ENCODE measurements at regions of chr13 and their contacts with region 1.

Region 1: DNA sequence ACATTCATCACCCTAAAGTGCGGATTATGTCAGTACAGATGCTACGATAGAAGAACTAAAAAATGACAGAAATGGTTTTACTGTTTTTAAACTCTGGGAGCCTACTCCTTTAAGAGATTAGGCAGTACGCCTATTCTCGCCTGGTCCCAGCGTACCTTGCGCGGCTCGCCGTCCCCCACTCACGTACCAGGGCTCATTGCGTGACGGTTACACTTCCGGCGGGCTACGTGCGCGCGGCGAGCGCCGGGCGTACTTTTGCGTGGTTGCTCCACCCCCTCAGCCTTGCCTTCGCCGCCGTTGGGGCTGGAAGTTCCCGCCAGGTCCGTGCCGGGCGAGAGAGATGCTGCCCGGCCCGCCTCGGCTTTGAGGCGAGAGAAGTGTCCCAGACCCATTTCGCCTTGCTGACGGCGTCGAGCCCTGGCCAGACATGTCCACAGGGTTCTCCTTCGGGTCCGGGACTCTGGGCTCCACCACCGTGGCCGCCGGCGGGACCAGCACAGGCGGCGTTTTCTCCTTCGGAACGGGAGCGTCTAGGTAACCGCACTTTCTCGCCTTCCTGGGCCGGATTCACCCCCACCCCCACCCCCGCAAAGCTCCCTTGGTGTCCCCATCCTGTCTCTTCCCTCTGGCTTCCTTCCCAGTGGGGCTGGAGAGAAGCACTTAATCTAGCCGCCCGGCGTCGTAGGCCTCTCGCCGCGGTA is at the start of gene NUP58:
- DNase-seq: peak; percentile 83 to 98 (median 93)
- ATAC-seq: peak; percentile 99
- H3K4me3 ChIP-seq: peak within 1 kb of the TSS; percentile 81 to 84
- H3K4me3 Mint-ChIP-seq: peak within 1 kb of the TSS; percentile 95
- H3K27ac ChIP-seq: peak within 1 kb of the TSS; percentile 83 to 92
- H3K27ac Mint-ChIP-seq: peak within 1 kb of the TSS; percentile 94
- H3K4me1 ChIP-seq: peaks cover 18% of the 10 kb centered on the region
- H3K4me1 Mint-ChIP-seq: peaks cover 46% of the 10 kb centered on the region
- H3K27me3 ChIP-seq: peaks cover 0 to 5% of the 10 kb centered on the region in 2 experiments
- H3K27me3 Mint-ChIP-seq: peaks cover 8% of the 10 kb centered on the region
- CTCF ChIP-seq: no peak
- total RNA-seq, gene NUP58: 73.2 to 78.9 TPM

Region 2: GRCh38 chr13:23888658-23889614 is 1412.6 kb before region 1 on chr13 and contains the start of gene MIPEP:
- CTCF ChIA-PET with region 1: no interaction called
- POLR2A ChIA-PET with region 1: no interaction called
- intact Hi-C with region 1: loop called in 1 of 2 experiments (anchors 2 kb)
- DNase-seq: peak; percentile 73 to 95 (median 87)
- ATAC-seq: peak; percentile 93
- H3K4me3 ChIP-seq: peak within 1 kb of the TSS; percentile 79
- H3K4me3 Mint-ChIP-seq: peak within 1 kb of the TSS; percentile 90
- H3K27ac ChIP-seq: peak within 1 kb of the TSS; percentile 61 to 71
- H3K27ac Mint-ChIP-seq: peak within 1 kb of the TSS; percentile 88
- H3K4me1 ChIP-seq: peaks cover 7% of the 10 kb centered on the region
- H3K4me1 Mint-ChIP-seq: peaks cover 23% of the 10 kb centered on the region
- H3K27me3 ChIP-seq: no peaks in the 10 kb centered on the region
- H3K27me3 Mint-ChIP-seq: peaks cover 3% of the 10 kb centered on the region
- CTCF ChIP-seq: peak; percentile 65
- total RNA-seq, gene MIPEP: 3.0 to 3.8 TPM

Region 3: DNA sequence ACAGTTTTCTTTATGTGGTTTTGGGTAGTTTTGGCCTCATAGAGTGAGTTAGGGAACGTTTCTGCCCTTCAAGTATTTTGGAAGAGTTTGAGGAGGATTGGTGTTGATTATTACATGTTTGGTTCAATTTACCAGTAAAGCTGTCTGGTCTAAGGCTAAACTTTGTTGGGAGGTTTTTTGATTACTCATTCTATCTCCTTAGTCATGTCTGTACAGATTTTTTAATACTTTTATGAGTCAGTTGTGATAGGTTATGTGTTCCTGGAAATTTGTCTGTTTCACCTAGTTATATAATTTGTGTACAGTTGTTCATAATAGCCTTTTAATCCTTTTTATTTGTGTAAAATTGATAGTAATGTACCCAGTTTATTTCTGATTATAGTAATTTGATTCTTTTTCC is 517.2 kb before region 1 on chr13:
- CTCF ChIA-PET with region 1: no interaction called
- POLR2A ChIA-PET with region 1: no interaction called
- intact Hi-C with region 1: no loop called
- DNase-seq: no peak
- ATAC-seq: no peak
- H3K4me3 ChIP-seq: no peak overlapping the region
- H3K4me3 Mint-ChIP-seq: no peak overlapping the region
- H3K27ac ChIP-seq: no peak overlapping the region
- H3K27ac Mint-ChIP-seq: no peak overlapping the region
- H3K4me1 ChIP-seq: no peaks in the 10 kb centered on the region
- H3K4me1 Mint-ChIP-seq: no peaks in the 10 kb centered on the region
- H3K27me3 ChIP-seq: peaks cover 0 to 3% of the 10 kb centered on the region in 2 experiments
- H3K27me3 Mint-ChIP-seq: peaks cover 27% of the 10 kb centered on the region
- CTCF ChIP-seq: no peak

Region 4: DNA sequence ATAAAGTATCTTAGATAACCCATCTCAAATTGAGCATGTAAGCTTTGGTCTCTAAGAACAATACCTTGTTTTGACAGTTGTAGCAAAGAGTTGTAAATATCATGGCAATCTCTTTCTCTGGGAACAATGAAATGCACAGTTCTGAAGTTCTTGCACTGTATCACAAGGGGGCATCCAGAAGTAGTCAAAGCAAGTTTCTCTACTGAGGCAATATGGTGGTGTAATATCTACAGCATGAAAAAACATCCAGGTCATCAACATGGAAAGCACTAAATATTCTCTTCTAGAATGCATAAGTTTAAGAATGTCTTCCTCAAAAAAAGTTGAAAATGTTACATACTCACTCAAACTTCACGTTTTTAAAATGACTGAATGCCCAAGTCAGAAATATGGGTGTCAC is 33.8 kb before region 1 on chr13:
- CTCF ChIA-PET with region 1: no interaction called
- POLR2A ChIA-PET with region 1: no interaction called
- intact Hi-C with region 1: loop called (anchors 5 kb)
- DNase-seq: peak in 2 of 9 experiments; percentile 31 to 51
- ATAC-seq: peak; percentile 92
- H3K4me3 ChIP-seq: no peak overlapping the region
- H3K4me3 Mint-ChIP-seq: no peak overlapping the region
- H3K27ac ChIP-seq: no peak overlapping the region
- H3K27ac Mint-ChIP-seq: peak overlapping the region; percentile 3
- H3K4me1 ChIP-seq: no peaks in the 10 kb centered on the region
- H3K4me1 Mint-ChIP-seq: peaks cover 16% of the 10 kb centered on the region
- H3K27me3 ChIP-seq: no peaks in the 10 kb centered on the region
- H3K27me3 Mint-ChIP-seq: no peaks in the 10 kb centered on the region
- CTCF ChIP-seq: no peak

Region 5: GRCh38 chr13:25286969-25287961 is 14.2 kb before region 1 on chr13 and contains the start of gene MTMR6:
- CTCF ChIA-PET with region 1: interaction called, 14 read pairs
- POLR2A ChIA-PET with region 1: interaction called, 13 read pairs
- intact Hi-C with region 1: loop called (anchors 1 kb)
- DNase-seq: peak; percentile 90 to 98 (median 94)
- ATAC-seq: peak; percentile 81
- H3K4me3 ChIP-seq: peak within 1 kb of the TSS; percentile 83 to 95
- H3K4me3 Mint-ChIP-seq: peak within 1 kb of the TSS; percentile 98
- H3K27ac ChIP-seq: peak within 1 kb of the TSS; percentile 94 to 97
- H3K27ac Mint-ChIP-seq: peak within 1 kb of the TSS; percentile 99
- H3K4me1 ChIP-seq: peaks cover 23% of the 10 kb centered on the region
- H3K4me1 Mint-ChIP-seq: peaks cover 41% of the 10 kb centered on the region
- H3K27me3 ChIP-seq: peaks cover 0 to 2% of the 10 kb centered on the region in 2 experiments
- H3K27me3 Mint-ChIP-seq: peaks cover 10% of the 10 kb centered on the region
- CTCF ChIP-seq: peak; percentile 99
- total RNA-seq, gene MTMR6: 41.9 to 44.4 TPM

Region 6: GRCh38 chr13:25447396-25447795 is 145.9 kb after region 1 on chr13:
- CTCF ChIA-PET with region 1: no interaction called
- POLR2A ChIA-PET with region 1: no interaction called
- intact Hi-C with region 1: no loop called
- DNase-seq: no peak
- ATAC-seq: no peak
- H3K4me3 ChIP-seq: no peak overlapping the region
- H3K4me3 Mint-ChIP-seq: no peak overlapping the region
- H3K27ac ChIP-seq: no peak overlapping the region
- H3K27ac Mint-ChIP-seq: no peak overlapping the region
- H3K4me1 ChIP-seq: no peaks in the 10 kb centered on the region
- H3K4me1 Mint-ChIP-seq: no peaks in the 10 kb centered on the region
- H3K27me3 ChIP-seq: no peaks in the 10 kb centered on the region
- H3K27me3 Mint-ChIP-seq: peaks cover 23% of the 10 kb centered on the region
- CTCF ChIP-seq: no peak

Region 7: DNA sequence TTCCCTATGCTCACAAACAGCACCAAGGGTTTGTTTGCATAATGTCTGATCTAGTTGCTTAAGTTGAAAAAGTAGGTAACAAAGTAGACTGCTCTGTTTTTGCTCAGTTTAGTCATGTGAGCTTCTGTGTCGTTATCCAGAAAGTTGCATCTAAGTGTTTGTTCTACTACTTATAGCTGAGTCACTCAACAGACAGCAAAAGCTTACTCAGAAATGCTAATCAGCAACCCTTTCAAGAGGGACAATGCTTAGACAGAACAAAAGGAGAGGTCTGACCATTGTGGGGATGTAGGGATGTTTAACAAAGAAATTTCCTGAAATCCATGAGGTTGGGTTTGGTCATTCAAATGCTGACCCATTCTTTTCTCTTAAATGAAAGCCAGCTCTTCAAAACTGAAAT is 176.7 kb after region 1 on chr13:
- CTCF ChIA-PET with region 1: no interaction called
- POLR2A ChIA-PET with region 1: no interaction called
- intact Hi-C with region 1: no loop called
- DNase-seq: no peak
- ATAC-seq: no peak
- H3K4me3 ChIP-seq: no peak overlapping the region
- H3K4me3 Mint-ChIP-seq: no peak overlapping the region
- H3K27ac ChIP-seq: no peak overlapping the region
- H3K27ac Mint-ChIP-seq: no peak overlapping the region
- H3K4me1 ChIP-seq: no peaks in the 10 kb centered on the region
- H3K4me1 Mint-ChIP-seq: no peaks in the 10 kb centered on the region
- H3K27me3 ChIP-seq: no peaks in the 10 kb centered on the region
- H3K27me3 Mint-ChIP-seq: peaks cover 14% of the 10 kb centered on the region
- CTCF ChIP-seq: no peak

Region 8: DNA sequence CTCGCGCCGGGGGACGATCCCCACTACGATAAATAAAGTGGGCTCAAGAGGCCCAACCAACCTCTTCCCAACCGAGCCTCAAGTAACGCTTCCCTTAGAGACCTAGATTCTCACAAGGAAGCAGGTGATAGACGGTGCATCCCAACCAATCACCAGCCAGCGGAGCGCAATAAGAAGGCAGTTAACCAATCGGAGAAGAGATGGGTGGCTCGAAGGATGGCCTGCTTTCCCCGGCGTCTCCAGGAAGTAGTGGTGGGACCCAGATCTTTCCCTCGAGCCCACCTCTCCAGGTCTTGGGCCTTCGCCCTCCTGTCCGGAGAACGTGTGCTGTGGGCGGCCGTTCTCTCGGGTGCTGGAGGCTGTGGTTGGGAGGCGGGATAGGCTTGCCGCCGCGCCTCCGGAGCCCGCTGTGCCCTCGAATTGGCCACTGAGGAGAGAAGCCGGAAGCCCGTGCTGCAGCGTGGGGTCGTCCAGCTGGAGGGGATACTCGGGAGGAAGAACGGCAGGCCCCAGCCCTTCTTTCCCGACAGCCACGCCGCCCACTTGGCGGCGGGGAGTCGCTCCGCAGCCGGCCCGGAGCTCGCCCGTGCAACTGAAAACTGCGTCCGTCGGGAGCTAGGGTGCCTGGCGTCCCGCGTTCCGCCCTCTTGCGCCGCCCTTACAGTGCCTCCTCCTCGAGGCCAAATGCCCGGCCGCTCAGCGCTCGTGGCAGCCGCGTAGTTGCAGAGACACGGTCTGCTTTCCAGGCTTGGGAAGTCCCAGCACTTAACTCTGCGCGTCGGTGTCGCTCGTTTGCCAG is 920.4 kb after region 1 on chr13 and contains the start of gene RNF6:
- CTCF ChIA-PET with region 1: no interaction called
- POLR2A ChIA-PET with region 1: no interaction called
- intact Hi-C with region 1: loop called (anchors 10 kb)
- DNase-seq: peak; percentile 73 to 97 (median 86)
- ATAC-seq: peak; percentile 92
- H3K4me3 ChIP-seq: peak within 1 kb of the TSS; percentile 97 to 99
- H3K4me3 Mint-ChIP-seq: peak within 1 kb of the TSS; percentile 99
- H3K27ac ChIP-seq: peak within 1 kb of the TSS; percentile 90 to 98
- H3K27ac Mint-ChIP-seq: peak within 1 kb of the TSS; percentile 100
- H3K4me1 ChIP-seq: peaks cover 26% of the 10 kb centered on the region
- H3K4me1 Mint-ChIP-seq: peaks cover 45% of the 10 kb centered on the region
- H3K27me3 ChIP-seq: no peaks in the 10 kb centered on the region
- H3K27me3 Mint-ChIP-seq: no peaks in the 10 kb centered on the region
- CTCF ChIP-seq: no peak
- total RNA-seq, gene RNF6: 50.3 to 55.0 TPM

Measured in CD8-positive, alpha-beta T cell (primary cell).